SK-N-SH (cell line): ENCODE measurements at regions of chr20 and their contacts with region 1.

Region 1: DNA sequence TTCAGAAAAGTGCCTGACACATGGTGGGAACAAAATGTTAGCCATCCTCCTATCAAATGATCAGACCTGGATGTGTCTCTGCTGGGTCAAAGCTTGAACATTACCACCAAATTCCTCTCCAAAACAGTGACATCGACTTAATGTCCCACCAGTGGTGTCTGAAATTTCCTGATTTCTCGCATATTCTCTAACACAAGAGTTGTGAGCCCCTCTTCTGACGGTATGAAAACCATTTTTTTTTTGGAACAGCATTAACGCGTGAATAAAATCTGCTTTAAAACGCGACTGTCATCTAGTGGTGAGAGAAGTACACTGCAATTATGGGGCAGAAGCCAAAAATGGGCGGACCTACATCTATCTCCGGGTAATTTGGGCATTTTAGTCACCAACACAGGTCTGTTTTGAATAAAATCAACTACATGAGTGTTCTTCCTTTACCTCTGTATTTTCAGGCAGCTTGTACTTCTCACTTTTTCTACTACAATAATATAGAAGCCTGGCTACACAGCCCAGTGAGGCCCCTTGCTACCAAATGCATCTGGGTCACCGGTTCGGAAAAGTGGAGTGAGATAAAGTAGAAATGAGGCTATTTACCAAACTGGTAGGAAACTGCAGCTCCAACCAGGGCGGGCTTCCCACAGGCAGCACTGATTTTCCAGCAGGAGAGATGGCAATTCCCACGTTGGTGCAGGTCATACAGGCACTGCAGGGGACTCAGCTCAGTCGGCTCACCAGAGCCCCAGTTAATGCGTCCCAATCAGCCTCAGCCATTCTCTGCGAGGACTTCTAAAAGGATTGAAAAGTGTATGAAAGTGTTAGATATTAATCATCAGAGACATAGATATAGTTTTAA is 27.4 kb downstream of the MGME1 start:
- DNase-seq: peak; percentile 75
- H3K4me3 ChIP-seq: peak overlapping the region; percentile 3 to 20; a peak in 2 of 4 replicates
- H3K27ac ChIP-seq: no peak overlapping the region
- H3K4me1 ChIP-seq: peaks cover 0 to 4% of the 10 kb centered on the region in 2 experiments; a peak in 1 of 4 replicates
- H3K27me3 ChIP-seq: no peaks in the 10 kb centered on the region
- CTCF ChIP-seq: peak; percentile 96
- EP300 ChIP-seq: no peak
- RAD21 ChIP-seq: peak; percentile 89

Region 2: DNA sequence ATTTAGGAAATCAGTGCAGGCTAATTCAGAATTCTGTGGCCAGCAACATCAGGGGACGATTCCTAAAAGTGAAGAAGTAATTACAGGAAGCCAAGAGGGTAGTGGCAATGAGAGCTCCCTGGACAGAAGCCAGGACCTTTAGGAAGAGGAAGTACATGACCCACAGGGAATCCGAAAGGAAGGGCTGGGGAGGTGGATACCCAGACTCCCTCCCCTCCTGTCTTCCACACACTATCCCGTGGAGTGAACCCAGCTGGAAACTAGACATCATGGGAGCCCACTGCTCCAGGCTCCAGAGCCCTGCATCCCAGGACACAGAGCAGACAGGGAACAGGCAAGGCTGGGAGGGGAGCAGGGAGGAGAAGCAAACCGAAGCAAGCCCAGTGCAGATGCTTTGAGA is 110.6 kb before region 1 on chr20:
- CTCF ChIA-PET with region 1: no interaction called
- POLR2A ChIA-PET with region 1: no interaction called
- DNase-seq: no peak
- H3K4me3 ChIP-seq: no peak overlapping the region
- H3K27ac ChIP-seq: no peak overlapping the region
- H3K4me1 ChIP-seq: peaks cover 0 to 5% of the 10 kb centered on the region in 2 experiments; a peak in 1 of 4 replicates
- H3K27me3 ChIP-seq: no peaks in the 10 kb centered on the region
- CTCF ChIP-seq: no peak
- EP300 ChIP-seq: no peak
- RAD21 ChIP-seq: no peak

Region 3: DNA sequence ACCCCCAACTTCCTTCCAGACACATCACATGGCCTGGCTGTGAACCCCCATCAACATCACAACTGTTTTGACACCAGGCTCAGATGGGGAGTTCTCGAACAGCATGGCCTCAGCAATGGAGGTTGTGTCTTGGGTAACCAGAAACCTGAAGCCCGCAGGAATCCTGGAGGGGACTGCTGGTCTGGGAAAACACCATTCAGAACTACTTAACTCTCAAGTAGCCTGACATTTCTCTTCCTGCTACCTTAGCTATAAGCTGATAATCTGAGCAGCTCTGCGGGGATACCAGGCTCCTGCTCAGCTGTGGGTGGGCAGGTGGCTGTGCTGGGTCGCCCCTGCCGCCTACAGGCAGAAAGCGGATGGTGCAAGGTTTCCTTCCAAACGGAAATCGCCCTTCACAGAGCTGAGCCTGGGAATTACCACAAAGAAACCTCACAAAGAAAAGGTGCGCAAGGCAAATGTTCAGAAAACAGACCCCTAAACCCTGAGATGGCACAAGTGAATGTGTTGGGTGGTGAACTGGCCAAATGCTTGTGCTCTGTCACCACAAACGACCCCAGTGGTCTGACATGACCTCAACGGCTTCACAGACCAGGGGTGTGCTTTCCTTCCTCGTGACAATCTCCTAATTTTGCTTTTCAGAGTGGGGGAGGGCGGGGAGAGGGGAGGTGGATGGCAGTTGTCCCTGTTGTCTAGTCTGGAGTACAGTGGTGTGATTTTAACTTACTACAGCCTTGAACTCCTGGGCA is 57.1 kb before region 1 on chr20:
- CTCF ChIA-PET with region 1: interaction called, 10 read pairs
- POLR2A ChIA-PET with region 1: no interaction called
- DNase-seq: peak; percentile 80
- H3K4me3 ChIP-seq: no peak overlapping the region; a peak in 1 of 4 replicates
- H3K27ac ChIP-seq: no peak overlapping the region
- H3K4me1 ChIP-seq: peaks cover 0 to 11% of the 10 kb centered on the region in 2 experiments; a peak in 1 of 4 replicates
- H3K27me3 ChIP-seq: no peaks in the 10 kb centered on the region
- CTCF ChIP-seq: peak; percentile 77
- EP300 ChIP-seq: no peak
- RAD21 ChIP-seq: peak; percentile 84

Region 4: GRCh38 chr20:17958373-17959256 is 37.6 kb before region 1 on chr20:
- CTCF ChIA-PET with region 1: interaction called, 13 read pairs
- POLR2A ChIA-PET with region 1: no interaction called
- DNase-seq: no peak
- H3K4me3 ChIP-seq: no peak overlapping the region
- H3K27ac ChIP-seq: peak overlapping the region; percentile 37 to 56
- H3K4me1 ChIP-seq: peaks cover 13 to 14% of the 10 kb centered on the region in 2 experiments; a peak in 3 of 4 replicates
- H3K27me3 ChIP-seq: no peaks in the 10 kb centered on the region
- CTCF ChIP-seq: peak; percentile 31
- EP300 ChIP-seq: no peak
- RAD21 ChIP-seq: no peak

Region 5: DNA sequence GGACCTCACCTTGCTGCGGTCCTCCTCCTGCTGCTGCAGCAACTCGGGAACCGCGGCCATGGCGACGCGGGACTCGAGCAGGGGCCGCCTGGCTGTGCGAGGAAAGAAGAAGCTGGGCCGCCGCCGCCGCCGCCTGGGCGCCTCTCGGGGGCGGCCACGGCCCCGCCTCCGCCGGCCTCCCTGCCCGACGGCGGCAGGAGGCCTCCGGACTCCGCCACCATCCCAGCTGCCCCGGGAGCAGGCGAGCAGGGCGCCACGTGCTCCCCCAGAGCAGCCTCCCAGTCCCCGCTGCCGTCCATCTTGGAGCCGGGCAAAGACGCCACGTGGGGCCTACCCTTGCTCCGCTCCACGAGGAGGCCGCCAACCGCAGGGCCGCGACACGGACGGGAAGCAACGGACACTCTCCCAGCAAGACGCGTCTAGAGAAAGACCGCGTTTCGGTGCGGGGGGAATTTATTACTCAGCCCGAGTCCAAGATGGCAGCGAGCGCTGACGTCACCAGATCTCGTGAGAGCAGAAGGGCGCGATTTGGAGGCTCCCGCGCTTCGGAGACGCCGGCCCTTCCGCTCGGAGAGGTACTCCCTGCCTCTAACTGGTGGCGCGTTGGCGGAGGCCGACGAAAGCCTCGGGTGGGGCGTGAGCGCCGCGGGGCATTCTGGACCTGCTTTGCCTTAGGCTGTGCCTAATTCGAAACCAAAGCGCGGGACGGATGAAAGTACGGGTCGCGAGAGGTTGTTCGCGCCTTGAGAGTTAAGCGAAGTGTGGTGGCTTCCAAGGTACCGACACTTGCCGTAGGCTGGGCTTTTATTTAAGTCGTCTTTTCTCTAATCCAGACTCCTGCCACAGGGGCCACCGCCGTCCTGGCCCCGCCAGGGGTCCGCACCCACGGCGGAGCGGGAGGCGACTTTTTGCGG is 27.6 kb before region 1 on chr20 and contains the starts of genes MGME1 and SNX5:
- CTCF ChIA-PET with region 1: interaction called, 12 read pairs
- POLR2A ChIA-PET with region 1: interaction called, 3 read pairs
- DNase-seq: peak; percentile 95
- H3K4me3 ChIP-seq: peak within 1 kb of the TSS; percentile 74 to 99
- H3K27ac ChIP-seq: peak within 1 kb of the TSS; percentile 96 to 100
- H3K4me1 ChIP-seq: peaks cover 32% of the 10 kb centered on the region in 2 experiments; a peak in 3 of 4 replicates
- H3K27me3 ChIP-seq: no peaks in the 10 kb centered on the region
- CTCF ChIP-seq: no peak
- EP300 ChIP-seq: peak in 1 of 2 experiments; percentile 4; a peak in 2 of 4 replicates
- RAD21 ChIP-seq: no peak
- polyA plus RNA-seq, gene MGME1: 7.9 and 10.2 TPM in 2 replicates
- polyA plus RNA-seq, gene SNX5: 69.2 and 76.2 TPM in 2 replicates

Region 6: DNA sequence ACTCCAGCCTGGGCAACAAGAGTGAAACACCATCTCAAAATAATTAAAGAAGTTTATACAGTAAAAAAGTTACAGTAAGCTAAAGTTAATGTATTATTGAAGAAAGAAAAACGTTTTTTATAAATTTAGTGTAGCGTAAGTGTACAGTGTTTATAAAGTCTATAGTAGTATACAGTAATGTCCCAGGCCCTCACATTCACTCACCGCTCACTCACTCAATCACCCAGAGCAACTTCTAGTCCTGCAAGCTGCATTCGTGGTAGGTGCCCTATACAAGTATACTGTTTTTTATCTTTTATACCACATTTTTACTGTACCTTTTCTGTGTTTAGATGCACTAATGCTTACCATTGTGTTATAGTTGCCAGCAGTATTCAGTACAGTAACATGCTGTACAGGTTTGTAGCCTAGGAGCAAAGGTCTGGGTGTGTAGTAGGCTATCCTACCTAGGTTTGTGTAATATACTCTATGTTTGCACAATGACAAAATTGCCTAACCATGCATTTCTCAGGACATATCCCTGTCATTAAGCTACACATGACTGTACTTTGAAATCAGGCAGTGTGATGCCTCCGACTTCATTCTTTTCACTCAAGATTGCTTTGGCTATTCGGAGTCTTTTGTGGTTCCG is 10.7 kb before region 1 on chr20:
- CTCF ChIA-PET with region 1: interaction called, 25 read pairs
- POLR2A ChIA-PET with region 1: no interaction called
- DNase-seq: no peak
- H3K4me3 ChIP-seq: no peak overlapping the region
- H3K27ac ChIP-seq: no peak overlapping the region
- H3K4me1 ChIP-seq: no peaks in the 10 kb centered on the region
- H3K27me3 ChIP-seq: no peaks in the 10 kb centered on the region
- CTCF ChIP-seq: no peak
- EP300 ChIP-seq: no peak
- RAD21 ChIP-seq: no peak